Mammary epithelial cell (primary cell): ENCODE measurements at regions of chr5 and their contacts with region 1.

Region 1: DNA sequence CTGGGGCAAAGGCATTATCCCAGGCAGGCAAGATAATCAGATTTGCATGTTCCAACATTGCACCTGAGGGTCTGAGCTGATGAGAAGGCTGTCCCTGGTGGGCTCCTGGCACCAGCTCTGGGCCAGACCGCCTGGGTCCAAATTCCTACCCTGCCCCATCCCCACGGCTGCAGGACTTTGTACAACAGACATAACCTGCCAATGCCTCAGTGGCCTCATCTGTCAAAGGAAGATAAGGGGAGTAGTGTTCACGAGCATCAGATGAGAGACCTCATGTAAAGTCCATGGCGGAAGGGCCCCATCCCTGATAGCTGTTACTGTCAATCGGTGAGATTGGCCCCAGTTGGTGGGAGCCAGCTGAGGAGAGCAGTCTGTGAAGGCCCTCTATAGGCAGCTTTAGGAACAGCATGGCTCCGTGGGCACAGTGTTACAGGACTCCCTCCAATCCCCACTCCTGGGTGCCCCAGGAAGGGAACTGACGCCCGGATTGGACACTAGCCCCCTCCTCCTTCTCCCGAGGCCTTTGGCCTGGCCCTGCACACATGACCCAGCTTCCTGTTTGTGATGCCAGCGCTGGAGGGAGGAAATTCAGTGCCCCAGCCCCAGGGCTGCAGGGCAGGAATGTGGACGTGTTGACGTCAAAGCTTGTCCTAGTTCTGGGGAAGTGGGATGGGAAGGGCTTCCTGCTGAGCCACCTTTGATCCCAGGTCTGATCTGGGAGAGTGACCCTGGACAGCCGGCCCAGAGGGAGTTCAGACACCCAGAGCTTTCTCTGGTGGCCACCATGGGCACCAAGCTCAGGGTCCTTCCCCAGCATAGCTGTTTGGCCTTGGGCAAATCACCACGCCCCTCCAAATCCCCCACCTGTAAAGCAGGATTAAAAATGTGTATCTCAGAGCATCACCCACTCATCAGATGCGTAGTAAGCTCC is 56.2 kb downstream of the DUSP1 start:
- DNase-seq: peak; percentile 45
- H3K4me3 ChIP-seq: no peak overlapping the region
- H3K27ac ChIP-seq: peak overlapping the region; percentile 19
- H3K4me1 ChIP-seq: peaks cover 9% of the 10 kb centered on the region
- H3K27me3 ChIP-seq: no peaks in the 10 kb centered on the region
- CTCF ChIP-seq: peak; percentile 90 to 93

Region 2: GRCh38 chr5:172745838-172746237 is 31.1 kb after region 1 on chr5:
- CTCF ChIA-PET with region 1: interaction called, 13 read pairs
- dilution Hi-C with region 1: no loop called
- in situ Hi-C with region 1: no loop called
- intact Hi-C with region 1: no loop called
- DNase-seq: no peak
- H3K4me3 ChIP-seq: no peak overlapping the region
- H3K27ac ChIP-seq: no peak overlapping the region
- H3K4me1 ChIP-seq: peaks cover 6% of the 10 kb centered on the region
- H3K27me3 ChIP-seq: no peaks in the 10 kb centered on the region
- CTCF ChIP-seq: peak in 1 of 2 donors; percentile 12

Region 3: GRCh38 chr5:172770675-172771438 is 56.1 kb after region 1 on chr5 and contains the start of gene DUSP1:
- CTCF ChIA-PET with region 1: interaction called, 4 read pairs
- dilution Hi-C with region 1: no loop called
- in situ Hi-C with region 1: no loop called
- intact Hi-C with region 1: loop called (anchors 1 kb)
- DNase-seq: peak; percentile 95
- H3K4me3 ChIP-seq: peak within 1 kb of the TSS; percentile 70 to 92 (median 73)
- H3K27ac ChIP-seq: peak within 1 kb of the TSS; percentile 93
- H3K4me1 ChIP-seq: peaks cover 57% of the 10 kb centered on the region
- H3K27me3 ChIP-seq: no peaks in the 10 kb centered on the region
- CTCF ChIP-seq: peak; percentile 29 to 59
- total RNA-seq, gene DUSP1: 20.7 to 28.8 TPM

Region 4: DNA sequence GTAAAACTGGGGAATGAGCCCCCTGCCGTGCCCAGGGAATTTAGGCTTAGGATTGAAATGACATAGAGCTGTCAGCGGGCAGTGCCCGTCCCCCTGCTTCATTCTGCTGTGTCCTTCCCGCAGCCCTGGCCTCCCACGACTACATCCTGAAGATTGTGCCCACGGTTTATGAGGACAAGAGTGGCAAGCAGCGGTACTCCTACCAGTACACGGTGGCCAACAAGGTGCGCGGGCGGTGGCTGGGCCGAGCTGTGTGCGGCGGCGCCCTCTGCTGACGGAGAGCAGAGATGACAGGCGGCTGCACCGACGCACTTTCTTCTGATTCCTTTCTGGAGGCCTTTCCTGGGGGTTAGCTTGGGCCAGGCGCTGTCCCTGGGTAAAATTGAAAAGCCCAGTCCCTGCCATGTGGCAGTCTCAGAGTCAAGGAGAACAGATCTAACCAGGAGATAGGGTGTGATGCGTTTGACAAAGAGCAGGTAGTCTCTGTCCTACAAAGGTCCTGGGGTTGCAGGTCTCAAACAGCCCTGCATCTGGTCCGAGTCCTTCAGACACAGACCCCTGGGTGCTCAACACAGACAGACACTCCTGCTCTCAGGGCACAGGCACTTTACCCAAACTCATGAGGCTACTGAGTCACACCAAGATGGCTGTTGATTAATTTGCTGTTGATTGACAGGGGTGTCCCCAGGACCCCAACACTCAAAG is 217.7 kb after region 1 on chr5:
- CTCF ChIA-PET with region 1: interaction called, 3 read pairs
- dilution Hi-C with region 1: no loop called
- in situ Hi-C with region 1: loop called in 1 of 2 experiments (anchors 5 kb)
- intact Hi-C with region 1: loop called (anchors 1 kb)
- DNase-seq: peak; percentile 40
- H3K4me3 ChIP-seq: no peak overlapping the region
- H3K27ac ChIP-seq: no peak overlapping the region
- H3K4me1 ChIP-seq: peaks cover 9% of the 10 kb centered on the region
- H3K27me3 ChIP-seq: no peaks in the 10 kb centered on the region
- CTCF ChIP-seq: peak; percentile 94 to 97

Region 5: GRCh38 chr5:173057062-173057924 is 342.5 kb after region 1 on chr5:
- CTCF ChIA-PET with region 1: no interaction called
- dilution Hi-C with region 1: no loop called
- in situ Hi-C with region 1: no loop called
- intact Hi-C with region 1: loop called (anchors 2 kb)
- DNase-seq: peak; percentile 98
- H3K4me3 ChIP-seq: peak overlapping the region; percentile 72 to 95 (median 86)
- H3K27ac ChIP-seq: peak overlapping the region; percentile 92
- H3K4me1 ChIP-seq: peaks cover 8% of the 10 kb centered on the region
- H3K27me3 ChIP-seq: no peaks in the 10 kb centered on the region
- CTCF ChIP-seq: peak in 1 of 2 donors; percentile 26

Region 6: GRCh38 chr5:173293817-173294672 is 579.3 kb after region 1 on chr5:
- CTCF ChIA-PET with region 1: no interaction called
- dilution Hi-C with region 1: loop called (anchors 25 kb)
- in situ Hi-C with region 1: loop called in 1 of 2 experiments (anchors 25 kb)
- intact Hi-C with region 1: no loop called
- DNase-seq: peak; percentile 65
- H3K4me3 ChIP-seq: no peak overlapping the region
- H3K27ac ChIP-seq: no peak overlapping the region
- H3K4me1 ChIP-seq: peaks cover 28% of the 10 kb centered on the region
- H3K27me3 ChIP-seq: no peaks in the 10 kb centered on the region
- CTCF ChIP-seq: peak; percentile 88 to 91

Region 7: DNA sequence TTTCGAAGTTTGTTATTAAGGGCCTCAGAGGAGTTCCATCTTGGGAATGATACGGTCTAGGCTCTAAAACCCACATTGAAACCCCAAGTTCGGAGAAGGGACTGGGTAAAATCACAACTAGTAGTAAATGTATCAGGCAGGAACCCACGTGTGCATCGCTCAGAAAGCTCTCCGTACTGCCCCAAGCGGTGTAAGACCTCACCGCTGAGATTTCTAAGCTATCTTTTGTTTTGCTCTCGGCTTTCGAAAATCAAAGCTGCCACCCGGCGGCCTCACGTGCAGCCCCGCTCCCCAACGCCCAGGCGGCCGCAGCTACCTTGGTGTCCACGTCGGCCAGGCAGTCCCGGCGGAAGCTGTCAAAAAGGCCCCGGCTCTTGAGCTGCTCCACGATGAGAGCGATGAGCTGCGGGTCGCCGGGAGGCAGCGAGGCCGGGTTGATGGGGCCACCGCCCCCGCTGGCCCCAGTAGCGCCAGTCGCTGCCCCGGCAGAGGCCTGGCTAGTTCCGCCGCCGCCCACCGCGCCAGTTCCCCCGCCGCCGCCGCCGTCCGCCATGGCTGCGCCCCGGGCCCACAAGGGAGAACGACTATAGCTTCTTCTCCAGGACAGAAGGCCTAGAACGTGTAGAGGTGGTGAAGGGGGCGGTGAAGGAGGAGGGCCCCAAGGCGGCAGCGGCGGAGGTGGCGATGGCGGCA is 901.3 kb after region 1 on chr5:
- CTCF ChIA-PET with region 1: no interaction called
- dilution Hi-C with region 1: no loop called
- in situ Hi-C with region 1: loop called in 1 of 2 experiments (anchors 25 kb)
- intact Hi-C with region 1: loop called (anchors 10 kb)
- DNase-seq: peak; percentile 66
- H3K4me3 ChIP-seq: peak overlapping the region; percentile 46 to 88 (median 63)
- H3K27ac ChIP-seq: peak overlapping the region; percentile 73
- H3K4me1 ChIP-seq: peaks cover 16% of the 10 kb centered on the region
- H3K27me3 ChIP-seq: no peaks in the 10 kb centered on the region
- CTCF ChIP-seq: peak; percentile 65 to 80